ENCODE measurements at regions of chr12 and their contacts with region 1.

Region 1: DNA sequence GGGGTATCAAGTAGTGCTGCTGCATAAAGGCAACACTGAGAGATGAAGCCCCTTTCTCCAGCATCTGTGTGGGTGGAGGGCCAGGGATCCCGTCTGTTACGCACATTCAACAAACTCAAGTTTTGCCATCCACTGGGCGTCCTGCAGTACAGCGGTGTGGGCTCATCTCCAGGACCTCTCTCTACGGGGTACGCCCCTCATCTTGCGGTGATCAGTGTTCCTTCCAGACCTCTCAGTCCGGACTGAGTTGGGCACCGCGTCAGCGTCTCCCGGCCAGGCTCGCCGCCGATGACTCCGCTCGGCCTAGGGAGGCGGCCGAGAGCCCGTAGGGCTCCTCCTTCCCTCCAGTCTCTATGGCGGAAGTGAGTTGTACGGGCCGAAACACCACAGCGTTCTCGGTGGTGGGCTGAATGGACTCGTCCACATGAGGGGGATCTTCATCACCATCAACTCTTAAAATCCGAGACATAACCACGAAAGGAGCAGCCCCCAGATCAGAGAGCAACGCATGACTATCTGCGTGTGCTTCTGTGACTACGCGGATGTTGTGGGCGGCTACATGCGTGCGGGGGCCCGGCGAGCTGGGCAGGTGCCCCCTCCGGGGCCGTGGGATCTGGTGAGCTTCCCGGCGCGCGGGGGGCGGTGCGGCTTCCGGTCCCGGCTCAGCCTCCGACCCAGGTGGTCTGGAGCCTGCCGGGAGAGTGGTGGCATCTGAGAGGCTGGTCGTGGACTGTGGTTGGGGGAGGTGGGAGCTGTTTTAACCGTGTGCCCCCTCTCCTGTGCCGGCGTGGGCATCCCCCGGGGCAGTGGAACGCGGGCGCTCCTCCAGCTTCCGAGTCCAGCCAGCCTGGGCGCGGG is at the start of gene ATG101:
- DNase-seq: peak; percentile 98
- H3K4me3 ChIP-seq: peak within 1 kb of the TSS; percentile 91
- H3K27ac ChIP-seq: peak within 1 kb of the TSS; percentile 73
- H3K4me1 ChIP-seq: peaks cover 39% of the 10 kb centered on the region
- CTCF ChIP-seq: peak; percentile 81
- total RNA-seq, gene ATG101: 53.9 and 65.5 TPM in 2 replicates

Region 2: DNA sequence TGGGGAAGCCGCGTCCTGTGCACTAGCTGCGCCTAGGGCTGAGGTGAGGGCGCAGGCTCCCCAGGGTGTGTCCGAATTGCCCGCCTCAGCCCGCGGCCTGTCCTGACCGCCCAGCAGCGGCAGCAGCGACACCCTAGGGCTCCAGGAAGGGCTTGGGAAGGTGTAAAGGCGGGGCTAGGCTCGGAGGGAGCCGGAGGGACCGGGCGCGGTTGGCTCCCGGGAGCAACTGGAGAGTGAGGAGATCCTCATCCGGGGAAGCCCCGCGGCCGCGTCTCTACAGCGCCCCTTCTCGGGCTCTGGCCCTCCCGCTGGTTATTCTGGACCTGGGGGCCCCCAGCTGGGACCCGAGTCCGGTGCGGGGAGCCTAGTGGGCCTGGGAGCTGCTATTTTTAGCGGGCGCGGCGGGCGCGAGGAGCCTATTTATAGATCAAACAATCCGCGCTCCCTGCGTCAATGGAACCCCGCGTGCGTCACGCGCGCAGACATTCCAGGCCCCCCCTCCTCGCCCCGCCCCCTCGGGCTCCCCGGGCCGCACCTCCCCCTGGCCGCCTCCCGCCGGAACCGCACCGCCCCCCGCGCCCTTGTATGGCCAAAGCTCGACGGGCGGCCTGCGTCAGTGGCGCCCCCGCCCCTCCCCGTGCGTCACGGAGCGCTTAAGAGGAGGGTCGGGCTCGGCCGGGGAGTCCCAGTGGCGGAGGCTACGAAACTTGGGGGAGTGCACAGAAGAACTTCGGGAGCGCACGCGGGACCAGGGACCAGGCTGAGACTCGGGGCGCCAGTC is 18.6 kb before region 1 on chr12 and contains the start of gene NR4A1:
- CTCF ChIA-PET with region 1: no interaction called
- POLR2A ChIA-PET with region 1: interaction called, 4 read pairs
- intact Hi-C with region 1: loop called (anchors 1 kb)
- DNase-seq: peak; percentile 84
- H3K4me3 ChIP-seq: peak within 1 kb of the TSS; percentile 68
- H3K27ac ChIP-seq: peak within 1 kb of the TSS; percentile 66
- H3K4me1 ChIP-seq: peaks cover 36% of the 10 kb centered on the region
- CTCF ChIP-seq: peak; percentile 53
- total RNA-seq, gene NR4A1: 25.3 and 29.3 TPM in 2 replicates